ENCODE measurements at regions of chr6 and their contacts with region 1.

Region 1: DNA sequence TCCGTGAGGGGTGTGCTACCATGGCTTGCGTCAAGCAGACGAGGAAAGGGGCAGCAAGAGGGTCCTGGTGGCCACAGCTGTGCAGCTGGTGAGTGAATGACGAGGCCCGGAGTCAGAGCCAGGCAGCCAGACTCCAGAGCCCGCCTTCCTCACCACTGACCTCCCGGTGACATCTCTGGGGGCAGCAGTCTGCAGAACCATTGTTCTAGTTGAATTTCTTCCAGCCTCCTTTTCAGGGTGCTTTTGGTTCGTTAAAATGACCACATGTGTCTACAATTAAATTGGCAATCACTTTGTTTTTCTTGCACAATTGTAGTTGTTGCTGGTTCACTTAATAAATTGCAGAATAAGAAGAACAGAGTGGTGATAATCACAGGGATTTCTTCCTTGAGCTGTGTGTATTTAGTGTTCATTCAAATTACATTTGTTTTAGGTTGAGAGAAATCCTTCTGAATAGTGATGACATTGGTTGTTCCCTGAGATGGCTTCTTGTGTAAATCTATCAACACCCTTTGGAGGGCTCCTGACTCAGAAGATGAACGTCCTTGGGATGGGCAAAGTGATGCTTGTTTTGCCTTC is 96.4 kb downstream of the TULP4 start:
- DNase-seq: peak; percentile 11
- H3K4me3 Mint-ChIP-seq: no peak overlapping the region
- H3K27ac Mint-ChIP-seq: no peak overlapping the region
- H3K4me1 Mint-ChIP-seq: peaks cover 37% of the 10 kb centered on the region
- H3K27me3 Mint-ChIP-seq: no peaks in the 10 kb centered on the region
- CTCF ChIP-seq: no peak

Region 2: DNA sequence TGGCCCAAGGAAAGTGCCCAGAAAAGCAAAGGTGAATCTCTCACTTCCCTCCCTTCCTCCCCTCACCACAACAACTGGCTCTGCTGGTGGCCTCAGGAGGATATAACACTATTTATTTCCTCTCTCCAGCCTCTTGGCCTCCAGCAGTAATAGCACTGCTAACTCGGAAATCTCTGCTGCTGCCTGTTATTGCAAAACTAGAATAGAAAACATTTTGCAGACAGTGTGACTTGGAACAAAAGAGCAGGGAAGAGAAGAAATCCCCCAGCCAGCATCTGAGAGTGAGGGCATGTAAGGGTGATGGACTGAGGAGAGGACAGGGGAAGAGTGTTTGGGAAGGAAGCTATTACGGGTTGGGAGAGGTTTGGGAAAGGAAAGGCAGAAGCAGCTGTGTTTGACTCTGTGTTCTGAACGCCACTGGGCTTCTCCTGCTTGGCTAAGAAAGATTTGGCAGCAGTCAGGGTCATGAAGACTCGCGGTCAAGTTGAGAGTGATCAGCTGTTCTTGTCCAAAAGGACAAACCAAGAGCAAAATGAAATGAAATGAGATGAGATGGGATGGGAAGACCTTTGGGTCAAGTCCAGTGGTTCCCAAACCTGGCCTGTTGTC is 666.6 kb before region 1 on chr6:
- CTCF ChIA-PET with region 1: no interaction called
- POLR2A ChIA-PET with region 1: no interaction called
- intact Hi-C with region 1: no loop called
- DNase-seq: no peak
- H3K4me3 Mint-ChIP-seq: no peak overlapping the region
- H3K27ac Mint-ChIP-seq: no peak overlapping the region
- H3K4me1 Mint-ChIP-seq: no peaks in the 10 kb centered on the region
- H3K27me3 Mint-ChIP-seq: peaks cover 6% of the 10 kb centered on the region
- CTCF ChIP-seq: no peak

Region 3: GRCh38 chr6:157954150-157955117 is 454.2 kb before region 1 on chr6:
- CTCF ChIA-PET with region 1: no interaction called
- POLR2A ChIA-PET with region 1: no interaction called
- intact Hi-C with region 1: no loop called
- DNase-seq: no peak
- H3K4me3 Mint-ChIP-seq: no peak overlapping the region
- H3K27ac Mint-ChIP-seq: no peak overlapping the region
- H3K4me1 Mint-ChIP-seq: peaks cover 5% of the 10 kb centered on the region
- H3K27me3 Mint-ChIP-seq: no peaks in the 10 kb centered on the region
- CTCF ChIP-seq: no peak

Region 4: GRCh38 chr6:158231551-158232315 is 176.9 kb before region 1 on chr6:
- CTCF ChIA-PET with region 1: interaction called, 4 read pairs
- POLR2A ChIA-PET with region 1: interaction called, 7 read pairs
- intact Hi-C with region 1: loop called (anchors 10 kb)
- DNase-seq: peak; percentile 55
- H3K4me3 Mint-ChIP-seq: peak overlapping the region; percentile 88
- H3K27ac Mint-ChIP-seq: peak overlapping the region; percentile 63
- H3K4me1 Mint-ChIP-seq: peaks cover 25% of the 10 kb centered on the region
- H3K27me3 Mint-ChIP-seq: no peaks in the 10 kb centered on the region
- CTCF ChIP-seq: no peak

Region 5: DNA sequence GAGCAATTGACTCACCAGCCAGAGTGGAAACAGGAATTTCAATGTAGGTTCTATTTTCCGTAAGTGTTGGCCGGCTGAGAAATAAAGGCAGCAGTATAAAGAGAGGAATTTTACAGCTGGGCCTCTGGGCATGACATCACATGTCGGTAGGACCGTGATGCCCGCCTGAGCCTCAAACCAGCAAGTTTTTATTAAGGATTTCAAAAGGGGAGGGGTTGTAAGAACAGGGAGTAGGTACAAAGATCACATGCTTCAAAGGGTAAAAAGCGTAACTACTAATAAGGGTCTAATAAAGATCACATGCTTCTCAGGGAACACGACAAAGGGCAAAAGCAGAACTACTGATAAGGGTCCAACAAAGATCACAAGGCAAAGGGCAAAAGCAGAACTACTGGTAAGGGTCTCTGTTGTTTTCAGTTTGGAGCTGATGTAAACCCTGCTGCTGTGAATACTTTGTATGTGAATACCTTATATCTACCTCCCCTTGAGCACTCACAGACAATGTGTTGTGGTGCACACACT is 105.4 kb before region 1 on chr6:
- CTCF ChIA-PET with region 1: no interaction called
- POLR2A ChIA-PET with region 1: interaction called, 10 read pairs
- intact Hi-C with region 1: no loop called
- DNase-seq: no peak
- H3K4me3 Mint-ChIP-seq: no peak overlapping the region
- H3K27ac Mint-ChIP-seq: peak overlapping the region; percentile 50
- H3K4me1 Mint-ChIP-seq: peaks cover 32% of the 10 kb centered on the region
- H3K27me3 Mint-ChIP-seq: no peaks in the 10 kb centered on the region
- CTCF ChIP-seq: no peak

Measured in MCF 10A (cell line).